Heart right ventricle (tissue), 16 donors: ENCODE measurements at regions of chr2 and their contacts with region 1.

Region 1: DNA sequence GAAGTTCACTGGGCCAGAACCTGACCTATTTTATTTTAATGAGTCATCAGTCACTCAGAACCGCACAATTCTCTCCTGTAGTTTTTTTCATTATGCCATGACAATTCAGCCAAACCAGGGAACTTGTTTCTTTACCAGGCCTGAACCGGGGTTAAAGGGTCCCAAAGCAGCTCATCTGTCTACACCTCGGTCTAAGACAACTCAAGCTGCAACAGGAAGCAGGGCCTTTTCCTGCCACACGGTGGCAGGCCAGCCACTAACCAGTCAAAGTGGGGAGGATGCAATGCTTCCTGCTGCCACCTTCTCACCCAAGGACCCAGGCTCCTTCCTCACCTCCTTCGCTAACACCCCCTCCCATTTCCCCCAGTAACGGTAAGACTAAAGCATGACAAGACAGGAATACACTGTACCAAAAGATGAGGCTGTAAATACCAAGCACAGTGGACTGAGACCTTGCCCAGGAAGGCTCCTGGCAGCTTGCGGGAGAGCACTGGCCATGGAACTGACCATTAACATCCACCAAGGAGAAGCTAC is 56.7 kb upstream of the ACKR3 start:
- DNase-seq: peak; percentile 62 to 72
- ATAC-seq: peak; percentile 72 to 92 (median 88)
- H3K4me3 ChIP-seq: no peak overlapping the region
- H3K27ac ChIP-seq: peak overlapping the region in 2 of 10 donors; percentile 3 to 48
- H3K4me1 ChIP-seq: peaks cover 0 to 20% (median 7%) of the 10 kb centered on the region in 9 donors
- H3K27me3 ChIP-seq: peaks cover 0 to 9% (median under 1%) of the 10 kb centered on the region in 7 donors
- CTCF ChIP-seq: peak; percentile 74 to 90 (median 89)

Region 2: GRCh38 chr2:235836491-235836926 is 676.5 kb before region 1 on chr2:
- intact Hi-C with region 1: no loop called
- DNase-seq: no peak
- ATAC-seq: no peak
- H3K4me3 ChIP-seq: no peak overlapping the region
- H3K27ac ChIP-seq: no peak overlapping the region
- H3K4me1 ChIP-seq: no peaks in the 10 kb centered on the region
- H3K27me3 ChIP-seq: no peaks in the 10 kb centered on the region
- CTCF ChIP-seq: no peak

Region 3: GRCh38 chr2:236338495-236339184 is 174.3 kb before region 1 on chr2:
- intact Hi-C with region 1: no loop called
- DNase-seq: peak; percentile 41 to 68
- ATAC-seq: peak in 7 of 8 donors; percentile 52 to 78 (median 61)
- H3K4me3 ChIP-seq: peak overlapping the region in 1 of 10 donors; percentile 11
- H3K27ac ChIP-seq: peak overlapping the region in 7 of 10 donors; percentile 27 to 76 (median 38)
- H3K4me1 ChIP-seq: peaks cover 0 to 74% (median 25%) of the 10 kb centered on the region in 9 donors
- H3K27me3 ChIP-seq: no peaks in the 10 kb centered on the region
- CTCF ChIP-seq: no peak

Region 4: DNA sequence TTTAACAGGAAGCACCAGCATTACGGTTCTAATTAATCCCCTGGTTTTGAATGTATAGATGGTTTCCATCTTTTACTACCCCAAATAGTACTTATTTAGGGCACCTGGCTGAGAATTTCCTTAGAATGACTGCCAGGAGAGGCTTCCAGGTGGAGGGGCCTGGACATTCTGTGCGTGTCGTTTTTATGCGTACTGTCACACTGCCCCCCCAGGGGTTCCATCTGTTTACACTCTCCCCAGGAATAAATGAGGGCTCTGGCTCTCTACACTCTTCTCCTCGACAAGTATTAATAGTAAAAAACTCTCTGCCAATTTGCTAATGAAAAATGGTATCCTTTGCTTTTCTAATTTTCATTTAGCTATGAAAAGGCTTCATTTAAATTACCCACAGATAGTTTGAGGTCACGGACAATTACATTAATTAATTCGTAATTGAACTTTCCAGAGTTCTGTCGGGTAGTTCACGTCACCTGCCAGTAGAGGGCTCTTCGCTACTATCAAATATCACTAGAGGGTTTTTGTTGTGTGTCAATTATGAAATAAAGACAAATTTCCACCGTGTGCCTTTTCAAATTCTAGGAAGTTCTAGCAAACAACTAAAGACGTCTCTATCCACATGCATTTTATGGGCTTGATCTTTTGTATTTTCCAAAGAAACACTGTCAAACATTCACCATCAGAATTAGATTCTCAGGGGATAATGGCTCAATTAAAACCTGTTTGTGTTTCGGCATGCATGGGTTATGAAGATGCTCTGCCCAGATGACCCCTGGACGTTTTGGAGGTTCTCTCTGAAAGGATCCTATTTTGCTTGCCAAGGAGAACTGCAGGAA is 160.0 kb before region 1 on chr2:
- intact Hi-C with region 1: loop called in 6 of 10 experiments (anchors 5 to 10 kb)
- DNase-seq: no peak
- ATAC-seq: peak in 3 of 8 donors; percentile 46 to 57 (median 51)
- H3K4me3 ChIP-seq: no peak overlapping the region
- H3K27ac ChIP-seq: no peak overlapping the region
- H3K4me1 ChIP-seq: peaks cover 0 to 7% (median 0%) of the 10 kb centered on the region in 9 donors
- H3K27me3 ChIP-seq: no peaks in the 10 kb centered on the region
- CTCF ChIP-seq: peak; percentile 69 to 92 (median 84)

Region 5: GRCh38 chr2:236562434-236562833 is 49.5 kb after region 1 on chr2:
- intact Hi-C with region 1: loop called in 8 of 10 experiments (anchors 1 to 10 kb)
- DNase-seq: no peak
- ATAC-seq: peak in 2 of 8 donors; percentile 48 to 54
- H3K4me3 ChIP-seq: no peak overlapping the region
- H3K27ac ChIP-seq: no peak overlapping the region
- H3K4me1 ChIP-seq: peaks cover 0 to 12% (median 7%) of the 10 kb centered on the region in 9 donors
- H3K27me3 ChIP-seq: peaks cover 0 to 5% (median 0%) of the 10 kb centered on the region in 7 donors
- CTCF ChIP-seq: peak; percentile 27 to 79 (median 67)

Region 6: DNA sequence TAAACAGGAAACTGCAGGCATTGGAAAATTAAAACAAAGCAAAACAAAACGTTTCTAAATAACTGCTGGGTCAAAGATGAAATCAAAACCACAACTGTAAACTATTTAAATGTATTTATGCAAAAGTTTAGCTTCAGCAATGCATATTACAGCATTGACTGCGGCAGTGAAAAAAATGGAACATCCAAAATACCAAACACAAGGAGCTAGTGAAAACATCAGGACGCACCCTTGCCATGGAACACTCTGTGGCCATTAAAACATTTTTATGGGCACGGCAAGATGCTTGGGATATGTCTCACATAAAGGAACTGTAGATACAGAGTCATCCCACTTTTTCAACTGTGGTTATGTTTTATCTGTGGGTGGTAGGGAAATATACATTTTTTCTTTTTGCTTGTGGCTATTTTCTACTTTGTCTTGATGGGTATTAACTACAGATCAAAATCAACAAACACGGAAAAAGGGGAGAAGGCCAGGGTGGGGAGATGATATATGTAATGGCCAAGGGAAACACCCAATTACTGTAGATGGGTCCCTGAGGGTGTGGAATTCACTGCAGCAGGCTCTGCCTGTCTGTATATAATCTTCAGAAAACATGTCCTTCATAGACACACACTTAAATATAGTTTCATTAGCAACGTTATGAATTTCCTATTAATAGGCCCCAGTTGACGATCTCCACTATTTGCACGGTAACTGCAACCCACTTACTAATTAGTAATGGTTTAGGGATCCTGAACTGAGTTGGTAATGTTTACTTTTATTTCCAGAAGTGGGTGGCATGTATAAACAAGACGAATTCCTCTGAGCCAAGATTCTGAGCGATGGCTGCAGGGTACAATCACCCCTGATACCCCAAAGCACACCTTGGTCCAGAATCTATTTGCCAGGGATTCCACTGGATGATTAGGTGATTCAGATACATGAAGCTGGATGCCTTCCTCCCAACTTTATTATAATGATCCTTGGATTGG is 167.2 kb after region 1 on chr2:
- intact Hi-C with region 1: loop called in 1 of 10 experiments (anchors 10 kb)
- DNase-seq: no peak
- ATAC-seq: no peak
- H3K4me3 ChIP-seq: no peak overlapping the region
- H3K27ac ChIP-seq: no peak overlapping the region
- H3K4me1 ChIP-seq: peaks cover 0 to 45% (median 15%) of the 10 kb centered on the region in 9 donors
- H3K27me3 ChIP-seq: peaks cover 0 to under 1% (median 0%) of the 10 kb centered on the region in 7 donors
- CTCF ChIP-seq: no peak

Region 7: DNA sequence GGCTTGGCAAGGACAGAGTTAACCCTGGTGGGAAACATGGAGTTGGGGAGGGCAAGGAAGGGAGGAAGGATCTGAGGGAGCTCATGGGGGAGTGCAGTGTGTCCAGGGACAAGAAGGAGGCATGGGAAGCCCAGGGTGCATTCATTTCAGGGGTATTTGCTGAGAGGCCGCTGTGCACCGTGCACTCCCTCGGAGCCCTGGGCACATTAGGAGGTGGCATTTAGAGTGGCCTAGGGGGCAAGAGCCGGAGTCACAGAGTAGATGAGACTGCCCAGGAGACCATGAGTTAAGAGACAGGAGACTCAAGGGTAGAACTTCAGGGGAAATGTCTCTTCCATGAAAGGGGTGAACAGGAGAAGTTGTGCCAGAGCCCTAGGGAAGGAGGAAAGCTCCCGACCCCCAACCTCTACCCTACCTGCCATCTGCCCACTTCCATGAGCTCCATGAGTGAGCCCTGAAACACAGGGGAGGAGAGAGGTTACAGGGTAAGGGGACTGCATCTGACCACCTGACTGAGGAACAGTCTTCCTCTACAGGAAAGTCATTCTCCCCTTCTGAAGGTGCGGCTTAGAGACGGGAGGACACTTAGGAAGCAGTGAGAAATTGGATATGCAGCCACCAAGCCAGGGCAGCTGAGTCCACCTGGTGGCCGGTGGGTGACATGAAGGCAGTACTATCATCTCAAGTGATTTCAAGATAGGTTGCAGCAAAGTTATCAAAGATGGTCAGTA is 514.2 kb after region 1 on chr2:
- intact Hi-C with region 1: loop called (anchors 1 to 5 kb)
- DNase-seq: peak; percentile 71 to 72
- ATAC-seq: peak; percentile 83 to 92 (median 89)
- H3K4me3 ChIP-seq: no peak overlapping the region
- H3K27ac ChIP-seq: peak overlapping the region in 1 of 10 donors; percentile 31
- H3K4me1 ChIP-seq: peaks cover 0 to 5% (median 0%) of the 10 kb centered on the region in 9 donors
- H3K27me3 ChIP-seq: no peaks in the 10 kb centered on the region
- CTCF ChIP-seq: peak; percentile 63 to 94 (median 86)

Region 8: GRCh38 chr2:237060534-237061312 is 547.8 kb after region 1 on chr2:
- intact Hi-C with region 1: loop called in 2 of 10 experiments (anchors 2 to 5 kb)
- DNase-seq: peak in 1 of 2 donors; percentile 55
- ATAC-seq: peak; percentile 66 to 79 (median 76)
- H3K4me3 ChIP-seq: no peak overlapping the region
- H3K27ac ChIP-seq: no peak overlapping the region
- H3K4me1 ChIP-seq: peaks cover 0 to 13% (median 4%) of the 10 kb centered on the region in 9 donors
- H3K27me3 ChIP-seq: no peaks in the 10 kb centered on the region
- CTCF ChIP-seq: peak; percentile 41 to 78 (median 72)